Spleen (tissue), 13 donors: ENCODE measurements at regions of chr2 and their contacts with region 1.

Region 1: GRCh38 chr2:30072250-30072842 is 74.5 kb upstream of the YPEL5 start:
- DNase-seq: no peak
- H3K4me3 ChIP-seq: no peak overlapping the region
- H3K27ac ChIP-seq: no peak overlapping the region
- H3K4me1 ChIP-seq: peaks cover 0 to 3% (median 0%) of the 10 kb centered on the region in 6 donors
- H3K27me3 ChIP-seq: peaks cover 0 to 64% (median 4%) of the 10 kb centered on the region in 7 donors
- CTCF ChIP-seq: peak; percentile 28 to 72 (median 59)
- POLR2A ChIP-seq: no peak

Region 2: GRCh38 chr2:29733965-29734364 is 338.4 kb before region 1 on chr2:
- intact Hi-C with region 1: no loop called
- DNase-seq: no peak
- H3K4me3 ChIP-seq: no peak overlapping the region
- H3K27ac ChIP-seq: no peak overlapping the region
- H3K4me1 ChIP-seq: no peaks in the 10 kb centered on the region
- H3K27me3 ChIP-seq: peaks cover 0 to 5% (median 0%) of the 10 kb centered on the region in 7 donors
- CTCF ChIP-seq: no peak
- POLR2A ChIP-seq: no peak

Region 3: DNA sequence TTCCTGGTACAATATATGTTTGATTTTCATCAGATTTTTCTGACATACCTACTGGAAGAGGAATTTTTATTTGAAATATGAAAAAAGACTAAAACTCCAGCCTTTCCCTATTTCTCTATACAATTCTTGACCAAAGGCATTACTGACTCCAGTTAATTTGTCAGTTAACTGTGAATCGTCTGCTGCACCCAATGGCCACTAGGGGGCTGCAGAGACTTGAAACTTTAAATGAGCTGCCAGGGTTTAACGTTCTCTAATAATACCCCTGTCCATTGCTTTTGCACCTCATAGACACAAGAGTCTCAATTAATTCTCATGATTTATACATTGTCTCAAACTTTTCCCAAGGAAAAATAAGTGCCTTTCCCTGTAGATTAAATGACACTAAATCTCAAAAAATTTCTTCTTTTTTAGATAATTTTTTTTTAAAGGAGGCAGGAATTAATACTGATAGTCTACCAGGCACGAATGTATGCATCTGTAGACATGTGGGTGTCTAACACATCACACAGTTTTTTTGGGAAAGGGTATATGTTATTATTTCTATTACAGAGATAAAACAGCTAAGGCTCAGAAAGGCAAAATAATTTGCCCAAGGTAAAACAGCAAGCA is 149.1 kb before region 1 on chr2:
- intact Hi-C with region 1: loop called (anchors 5 kb)
- DNase-seq: no peak
- H3K4me3 ChIP-seq: no peak overlapping the region
- H3K27ac ChIP-seq: no peak overlapping the region
- H3K4me1 ChIP-seq: peaks cover 17 to 29% (median 21%) of the 10 kb centered on the region in 6 donors
- H3K27me3 ChIP-seq: peaks cover 12 to 72% (median 57%) of the 10 kb centered on the region in 7 donors
- CTCF ChIP-seq: peak; percentile 15 to 85 (median 73)
- POLR2A ChIP-seq: no peak

Region 4: DNA sequence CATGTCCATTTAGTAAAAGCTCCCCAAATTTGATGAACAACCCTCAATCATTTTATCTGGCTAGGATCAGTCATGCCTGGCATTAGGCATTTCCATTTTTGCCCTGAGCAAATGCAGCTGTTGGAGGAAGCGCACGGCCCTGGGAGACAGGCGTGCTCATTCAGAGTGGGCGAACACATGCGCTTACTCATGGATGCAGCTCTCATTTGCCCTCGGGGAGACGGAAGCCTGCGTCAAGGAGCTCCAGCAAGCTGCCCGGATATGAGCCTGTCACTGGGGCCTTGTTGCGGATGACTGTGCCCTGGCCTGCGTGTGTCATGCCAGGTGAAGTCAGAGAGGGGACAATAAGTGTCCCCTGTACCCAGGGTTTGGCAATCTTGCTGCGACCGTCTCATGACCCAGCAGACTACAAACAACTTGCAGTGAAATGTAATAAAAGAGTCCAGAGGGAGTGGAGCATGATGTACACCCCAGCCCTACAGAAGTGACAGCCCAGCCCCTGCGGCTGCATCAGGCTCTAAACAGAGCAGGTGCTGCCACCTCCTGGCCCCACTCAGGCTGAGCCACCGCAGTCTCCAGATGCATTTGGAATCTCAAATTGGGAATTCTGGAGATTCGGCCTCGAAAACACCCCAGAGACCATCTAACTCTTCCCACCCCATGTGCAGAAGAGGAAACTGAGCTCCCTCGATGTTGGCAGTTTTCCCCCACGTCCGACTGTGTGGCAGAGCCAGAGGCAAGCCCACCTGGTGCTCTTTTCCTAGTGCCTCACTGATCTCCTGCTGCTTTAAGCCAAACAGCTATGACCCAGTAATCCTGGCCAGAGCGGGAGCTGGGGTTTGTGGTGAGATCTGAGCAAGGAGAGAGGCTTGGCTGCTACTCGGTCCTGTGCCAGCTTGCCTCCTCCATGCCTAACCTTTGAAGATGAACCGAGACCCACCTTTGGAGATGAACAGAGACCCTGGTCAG is 46.0 kb before region 1 on chr2:
- intact Hi-C with region 1: no loop called
- DNase-seq: no peak
- H3K4me3 ChIP-seq: no peak overlapping the region
- H3K27ac ChIP-seq: no peak overlapping the region
- H3K4me1 ChIP-seq: no peaks in the 10 kb centered on the region
- H3K27me3 ChIP-seq: peaks cover 0 to 23% (median 0%) of the 10 kb centered on the region in 7 donors
- CTCF ChIP-seq: peak in 5 of 11 experiments; percentile 9 to 44 (median 36)
- POLR2A ChIP-seq: no peak